ENCODE measurements at regions of chr1 and their contacts with region 1.

Region 1: DNA sequence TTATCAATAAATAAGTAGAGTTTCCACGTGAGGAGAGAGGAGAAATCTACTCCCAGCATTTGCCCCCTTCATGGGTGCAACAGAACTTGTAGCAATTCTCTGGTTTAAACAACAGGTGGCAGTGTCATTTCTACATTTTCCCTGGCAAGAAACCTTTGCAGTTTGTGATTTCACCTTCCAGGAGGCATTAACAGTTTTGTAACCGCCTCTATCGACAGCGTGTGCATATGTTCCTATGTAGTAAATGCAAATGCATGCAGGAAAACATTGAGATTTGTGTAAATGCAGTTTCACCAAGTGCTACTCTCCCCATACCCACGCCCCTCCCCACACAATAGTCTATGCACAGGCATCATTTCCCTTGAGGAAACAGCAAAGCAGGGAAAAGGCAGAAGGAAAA is 494.7 kb downstream of the SMYD3 start:
- DNase-seq: peak; percentile 16
- ATAC-seq: no peak
- H3K4me3 ChIP-seq: no peak overlapping the region
- H3K4me3 Mint-ChIP-seq: no peak overlapping the region
- H3K27ac ChIP-seq: no peak overlapping the region
- H3K27ac Mint-ChIP-seq: no peak overlapping the region
- H3K4me1 ChIP-seq: no peaks in the 10 kb centered on the region
- H3K4me1 Mint-ChIP-seq: no peaks in the 10 kb centered on the region
- H3K27me3 ChIP-seq: no peaks in the 10 kb centered on the region
- H3K27me3 Mint-ChIP-seq: no peaks in the 10 kb centered on the region
- CTCF ChIP-seq: peak; percentile 50

Region 2: DNA sequence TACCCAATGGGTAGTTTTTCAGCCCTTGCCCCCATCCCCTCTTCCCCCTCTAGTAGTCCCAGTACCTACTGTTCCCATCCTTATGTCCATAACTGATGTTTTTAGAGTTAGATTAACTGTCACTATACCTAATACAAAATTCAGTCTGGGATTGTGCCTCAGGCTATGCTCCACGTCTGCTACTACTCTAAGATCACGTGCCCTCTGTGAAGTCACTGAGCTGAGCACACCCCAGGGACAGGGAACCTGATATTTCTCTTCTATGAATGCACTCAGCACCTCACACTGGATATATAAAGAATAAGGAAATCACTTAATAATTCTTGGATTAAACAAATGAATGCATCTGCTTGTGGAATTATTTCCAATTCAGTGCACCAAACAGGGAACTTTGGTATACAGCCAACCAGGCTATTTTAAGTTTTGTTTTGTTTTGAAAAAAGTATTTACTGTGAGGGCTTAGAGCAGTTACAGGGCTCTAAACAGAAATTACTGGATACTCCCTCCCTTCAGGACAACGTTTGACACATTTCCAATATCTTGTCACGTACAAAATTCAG is 186.8 kb after region 1 on chr1:
- CTCF ChIA-PET with region 1: no interaction called
- POLR2A ChIA-PET with region 1: no interaction called
- intact Hi-C with region 1: no loop called
- DNase-seq: no peak
- ATAC-seq: no peak
- H3K4me3 ChIP-seq: no peak overlapping the region
- H3K4me3 Mint-ChIP-seq: no peak overlapping the region
- H3K27ac ChIP-seq: no peak overlapping the region
- H3K27ac Mint-ChIP-seq: no peak overlapping the region
- H3K4me1 ChIP-seq: no peaks in the 10 kb centered on the region
- H3K4me1 Mint-ChIP-seq: no peaks in the 10 kb centered on the region
- H3K27me3 ChIP-seq: no peaks in the 10 kb centered on the region
- H3K27me3 Mint-ChIP-seq: no peaks in the 10 kb centered on the region
- CTCF ChIP-seq: no peak

Region 3: DNA sequence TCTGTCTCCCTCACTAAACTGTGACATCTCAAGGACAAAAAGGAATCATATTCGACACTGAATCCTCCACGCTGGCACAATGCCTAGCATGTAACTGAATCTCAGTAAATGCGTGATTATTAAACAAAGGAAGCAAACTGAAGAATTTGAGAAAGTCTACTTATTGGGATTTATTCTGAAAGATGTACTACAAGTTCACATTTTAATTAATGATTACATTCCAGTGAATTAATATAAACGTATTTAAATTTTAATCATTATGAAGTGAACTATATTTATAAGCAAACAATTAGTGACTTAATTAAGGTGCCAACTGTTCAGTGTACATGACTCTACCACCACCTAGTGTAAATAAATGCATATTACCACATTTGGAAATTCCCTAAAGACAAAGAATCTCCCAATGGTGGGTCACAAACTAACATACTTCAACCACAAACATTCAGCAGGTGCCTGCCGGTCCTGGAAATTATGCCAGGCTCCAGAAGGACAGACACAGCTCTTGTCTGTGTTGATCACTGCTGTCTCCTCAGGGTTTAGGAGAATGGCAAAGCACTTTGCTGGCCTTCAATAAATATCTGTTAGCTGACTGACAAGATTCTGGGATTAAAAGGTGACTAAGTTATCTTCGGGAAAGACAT is 438.4 kb after region 1 on chr1:
- CTCF ChIA-PET with region 1: interaction called, 5 read pairs
- POLR2A ChIA-PET with region 1: no interaction called
- intact Hi-C with region 1: loop called (anchors 5 kb)
- DNase-seq: peak; percentile 32
- ATAC-seq: no peak
- H3K4me3 ChIP-seq: no peak overlapping the region
- H3K4me3 Mint-ChIP-seq: no peak overlapping the region
- H3K27ac ChIP-seq: no peak overlapping the region
- H3K27ac Mint-ChIP-seq: no peak overlapping the region
- H3K4me1 ChIP-seq: no peaks in the 10 kb centered on the region
- H3K4me1 Mint-ChIP-seq: no peaks in the 10 kb centered on the region
- H3K27me3 ChIP-seq: no peaks in the 10 kb centered on the region
- H3K27me3 Mint-ChIP-seq: no peaks in the 10 kb centered on the region
- CTCF ChIP-seq: peak; percentile 76

Region 4: GRCh38 chr1:246753670-246754535 is 741.6 kb after region 1 on chr1:
- CTCF ChIA-PET with region 1: no interaction called
- POLR2A ChIA-PET with region 1: no interaction called
- intact Hi-C with region 1: loop called (anchors 5 kb)
- DNase-seq: peak; percentile 72
- ATAC-seq: peak; percentile 80
- H3K4me3 ChIP-seq: no peak overlapping the region
- H3K4me3 Mint-ChIP-seq: no peak overlapping the region
- H3K27ac ChIP-seq: no peak overlapping the region
- H3K27ac Mint-ChIP-seq: no peak overlapping the region
- H3K4me1 ChIP-seq: peaks cover 1 to 3% of the 10 kb centered on the region in 2 donors
- H3K4me1 Mint-ChIP-seq: peaks cover 2% of the 10 kb centered on the region
- H3K27me3 ChIP-seq: no peaks in the 10 kb centered on the region
- H3K27me3 Mint-ChIP-seq: no peaks in the 10 kb centered on the region
- CTCF ChIP-seq: peak; percentile 78

Measured in B cell (primary cell).